ENCODE measurements at regions of chr5 and their contacts with region 1.

Region 1: GRCh38 chr5:136769900-136770684 is 404.7 kb upstream of the TRPC7 start:
- ATAC-seq: peak; percentile 83 to 96 (median 90)
- H3K4me3 ChIP-seq: no peak overlapping the region
- H3K27ac ChIP-seq: no peak overlapping the region
- H3K4me1 ChIP-seq: peaks cover 0 to 9% of the 10 kb centered on the region in 2 donors

Region 2: DNA sequence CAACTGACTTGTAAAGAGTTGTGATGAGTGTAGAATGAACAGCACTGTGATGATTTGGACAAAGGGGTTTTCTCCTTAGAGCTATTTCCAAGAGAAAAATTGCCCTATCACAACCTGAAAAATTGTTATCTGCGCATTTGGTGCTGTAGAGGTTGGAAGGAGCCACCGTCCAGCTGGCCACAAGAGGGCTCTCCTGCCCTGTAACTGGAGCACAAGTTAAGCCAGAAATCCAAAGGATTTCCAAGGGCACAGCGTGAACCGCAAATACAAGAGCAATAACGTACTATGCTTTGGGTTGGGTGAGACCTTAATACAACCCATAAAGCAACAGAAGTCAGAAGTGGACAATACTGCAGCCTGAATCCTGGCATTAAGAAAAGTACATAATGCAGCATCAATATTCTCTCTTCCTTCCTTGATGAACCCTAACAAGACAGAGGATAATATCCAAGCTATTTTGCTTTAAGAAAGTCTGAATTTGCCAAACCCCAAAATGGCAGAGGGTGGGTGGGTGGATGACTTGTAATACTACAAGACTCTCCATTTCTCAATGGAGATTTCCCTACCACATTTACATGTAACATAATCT is 520.3 kb before region 1 on chr5:
- in situ Hi-C with region 1: loop called in 8 of 9 experiments (anchors 10 to 25 kb)
- ATAC-seq: peak; percentile 76 to 99 (median 89)
- H3K4me3 ChIP-seq: no peak overlapping the region
- H3K27ac ChIP-seq: no peak overlapping the region
- H3K4me1 ChIP-seq: no peaks in the 10 kb centered on the region

Region 3: GRCh38 chr5:136364307-136364706 is 405.8 kb before region 1 on chr5:
- in situ Hi-C with region 1: loop called in 3 of 9 experiments (anchors 10 to 25 kb)
- ATAC-seq: peak in 2 of 8 experiments; percentile 23 to 46
- H3K4me3 ChIP-seq: no peak overlapping the region
- H3K27ac ChIP-seq: no peak overlapping the region
- H3K4me1 ChIP-seq: no peaks in the 10 kb centered on the region

Region 4: DNA sequence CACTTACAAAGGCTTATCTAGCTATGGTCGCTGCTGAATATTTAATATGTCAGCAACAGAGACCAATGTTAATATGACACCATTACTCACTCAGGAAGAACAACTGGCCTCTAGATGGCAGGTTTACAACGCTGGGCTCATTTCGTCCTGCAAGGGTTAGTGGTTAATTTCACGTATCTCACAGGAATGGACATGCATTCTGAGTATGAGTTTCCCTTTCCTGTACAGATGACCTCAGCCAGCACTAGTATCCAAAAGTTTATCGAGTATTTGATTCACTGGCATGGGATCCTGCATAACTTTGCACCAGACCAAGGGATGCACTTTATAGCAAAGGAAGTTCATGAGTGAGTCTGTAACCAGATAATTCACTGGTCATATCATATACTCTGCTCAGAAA is 396.1 kb before region 1 on chr5:
- in situ Hi-C with region 1: loop called in 3 of 9 experiments (anchors 10 to 25 kb)
- ATAC-seq: peak in 4 of 8 experiments; percentile 43 to 97 (median 94)
- H3K4me3 ChIP-seq: no peak overlapping the region
- H3K27ac ChIP-seq: no peak overlapping the region
- H3K4me1 ChIP-seq: no peaks in the 10 kb centered on the region

Region 5: GRCh38 chr5:136501133-136501532 is 269.0 kb before region 1 on chr5:
- in situ Hi-C with region 1: no loop called
- ATAC-seq: no peak
- H3K4me3 ChIP-seq: no peak overlapping the region
- H3K27ac ChIP-seq: no peak overlapping the region
- H3K4me1 ChIP-seq: no peaks in the 10 kb centered on the region